Activated T-helper 1 cell treated with anti-CD3 and anti-CD28 coated beads, Interleukin-12 subunit alpha, Interleukin-12 subunit beta, Interleukin-2, Interleukin-4 antibody, amounts not matched to agents 30 ng/mL and 10 ng/mL and 1 ng/mL, durations not matched to agents 14 hours and 24 hours and 36 hours (primary cell): ENCODE measurements at regions of chr6 and their contacts with region 1.

Region 1: GRCh38 chr6:31795616-31796298 is at the start of gene VARS1:
- DNase-seq: peak; percentile 84
- H3K4me3 Mint-ChIP-seq: peak within 1 kb of the TSS; percentile 86
- H3K27ac Mint-ChIP-seq: peak within 1 kb of the TSS; percentile 96
- H3K4me1 Mint-ChIP-seq: peaks cover 36% of the 10 kb centered on the region
- H3K27me3 Mint-ChIP-seq: no peaks in the 10 kb centered on the region
- total RNA-seq, gene VARS1: 150 and 161 TPM in 2 replicates

Region 2: GRCh38 chr6:31225735-31226134 is 570.0 kb before region 1 on chr6:
- intact Hi-C with region 1: no loop called
- DNase-seq: no peak
- H3K4me3 Mint-ChIP-seq: no peak overlapping the region
- H3K27ac Mint-ChIP-seq: no peak overlapping the region
- H3K4me1 Mint-ChIP-seq: no peaks in the 10 kb centered on the region
- H3K27me3 Mint-ChIP-seq: peaks cover 10% of the 10 kb centered on the region

Region 3: DNA sequence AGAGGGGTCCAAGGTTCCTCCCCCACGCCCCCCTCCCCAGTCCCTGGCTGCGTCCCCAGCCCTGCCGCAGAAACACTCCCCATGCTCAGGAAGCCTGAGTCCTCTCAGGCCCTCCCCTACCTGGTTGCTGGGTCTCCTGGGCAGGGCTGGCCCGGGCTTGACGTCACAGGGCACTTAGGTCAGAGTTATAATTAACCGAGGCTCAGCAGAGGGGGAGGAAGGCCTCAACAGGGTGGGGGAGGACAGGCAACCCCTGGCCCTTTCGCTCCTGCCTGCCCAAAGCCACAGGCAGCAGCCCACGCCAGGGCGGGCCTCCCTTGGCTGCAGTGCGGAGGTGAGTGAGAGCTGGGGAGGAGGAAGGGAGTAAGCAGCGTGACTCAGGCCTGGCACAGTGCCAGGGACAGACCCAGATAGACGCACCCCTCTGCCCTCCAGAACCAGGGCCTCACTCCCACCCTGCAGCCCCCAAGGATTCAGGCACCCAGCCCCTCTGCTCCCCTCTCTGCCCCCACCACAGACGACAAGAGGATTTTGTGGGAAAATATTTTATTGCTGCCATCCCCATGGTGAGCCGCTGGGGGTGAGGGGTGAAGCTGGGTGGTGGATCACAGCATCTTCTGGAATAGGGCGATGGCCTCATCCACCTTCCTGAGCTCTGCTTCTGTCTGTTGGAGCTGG is 18.6 kb before region 1 on chr6 and contains the start of gene VWA7:
- intact Hi-C with region 1: loop called (anchors 1 kb)
- DNase-seq: peak; percentile 68
- H3K4me3 Mint-ChIP-seq: no peak within 1 kb of the TSS
- H3K27ac Mint-ChIP-seq: peak within 1 kb of the TSS; percentile 87
- H3K4me1 Mint-ChIP-seq: peaks cover 25% of the 10 kb centered on the region
- H3K27me3 Mint-ChIP-seq: no peaks in the 10 kb centered on the region
- total RNA-seq, gene VWA7: 2.9 and 5.0 TPM in 2 replicates

Region 4: DNA sequence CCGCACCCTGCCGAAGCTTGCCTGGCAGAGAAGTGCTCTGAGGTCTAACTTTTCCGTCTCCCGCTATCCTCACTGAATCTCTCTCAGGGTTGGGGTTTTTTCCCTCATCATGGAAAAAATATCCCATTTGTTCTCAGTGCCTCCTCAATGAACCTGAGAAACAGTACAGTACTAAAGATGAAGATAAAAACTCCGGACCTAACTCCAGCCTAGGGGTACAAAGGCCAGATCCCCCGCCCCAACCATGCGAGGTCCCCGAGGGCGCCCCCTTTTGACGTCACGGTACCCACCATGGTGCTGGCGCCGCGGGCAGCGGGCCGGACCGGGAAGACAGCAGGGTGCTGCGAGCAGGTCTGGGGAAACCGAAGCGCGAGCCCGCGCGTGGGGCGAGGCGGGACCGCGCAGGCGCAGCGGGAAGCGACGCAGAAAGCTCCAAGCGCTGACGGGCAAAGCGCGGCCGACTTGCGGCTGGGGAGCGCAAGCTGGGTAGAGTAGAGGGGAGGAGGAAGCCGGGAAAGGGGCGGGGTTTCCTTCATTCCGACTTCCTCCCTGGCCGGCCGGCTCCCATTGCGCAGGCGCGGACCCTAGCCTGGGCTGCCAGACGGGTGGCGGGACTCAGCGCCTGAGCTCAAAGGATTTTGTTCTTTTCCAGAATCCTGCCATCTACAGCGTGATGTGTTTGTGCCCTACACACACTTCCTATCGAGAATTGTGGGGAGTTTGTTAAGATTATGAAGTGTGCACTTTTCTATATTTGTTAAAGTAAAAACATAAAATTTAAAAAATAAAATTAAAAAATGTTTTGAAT is 10.9 kb after region 1 on chr6 and contains the start of gene LSM2:
- intact Hi-C with region 1: loop called (anchors 1 kb)
- DNase-seq: peak; percentile 97
- H3K4me3 Mint-ChIP-seq: peak within 1 kb of the TSS; percentile 94
- H3K27ac Mint-ChIP-seq: peak within 1 kb of the TSS; percentile 90
- H3K4me1 Mint-ChIP-seq: peaks cover 20% of the 10 kb centered on the region
- H3K27me3 Mint-ChIP-seq: no peaks in the 10 kb centered on the region
- total RNA-seq, gene LSM2: 136 and 137 TPM in 2 replicates

Region 5: GRCh38 chr6:31815025-31815838 is 19.5 kb after region 1 on chr6 and contains the starts of genes HSPA1A and HSPA1L:
- intact Hi-C with region 1: loop called (anchors 2 kb)
- DNase-seq: peak; percentile 75
- H3K4me3 Mint-ChIP-seq: peak within 1 kb of the TSS; percentile 93
- H3K27ac Mint-ChIP-seq: peak within 1 kb of the TSS; percentile 95
- H3K4me1 Mint-ChIP-seq: peaks cover 50% of the 10 kb centered on the region
- H3K27me3 Mint-ChIP-seq: no peaks in the 10 kb centered on the region
- total RNA-seq, gene HSPA1A: 173 and 175 TPM in 2 replicates
- total RNA-seq, gene HSPA1L: 2.2 and 2.9 TPM in 2 replicates

Region 6: GRCh38 chr6:31827286-31828079 is 31.7 kb after region 1 on chr6 and contains the start of gene HSPA1B:
- intact Hi-C with region 1: loop called (anchors 1 kb)
- DNase-seq: peak; percentile 95
- H3K4me3 Mint-ChIP-seq: peak within 1 kb of the TSS; percentile 83
- H3K27ac Mint-ChIP-seq: peak within 1 kb of the TSS; percentile 93
- H3K4me1 Mint-ChIP-seq: peaks cover 41% of the 10 kb centered on the region
- H3K27me3 Mint-ChIP-seq: no peaks in the 10 kb centered on the region
- total RNA-seq, gene HSPA1B: 152 and 155 TPM in 2 replicates

Region 7: DNA sequence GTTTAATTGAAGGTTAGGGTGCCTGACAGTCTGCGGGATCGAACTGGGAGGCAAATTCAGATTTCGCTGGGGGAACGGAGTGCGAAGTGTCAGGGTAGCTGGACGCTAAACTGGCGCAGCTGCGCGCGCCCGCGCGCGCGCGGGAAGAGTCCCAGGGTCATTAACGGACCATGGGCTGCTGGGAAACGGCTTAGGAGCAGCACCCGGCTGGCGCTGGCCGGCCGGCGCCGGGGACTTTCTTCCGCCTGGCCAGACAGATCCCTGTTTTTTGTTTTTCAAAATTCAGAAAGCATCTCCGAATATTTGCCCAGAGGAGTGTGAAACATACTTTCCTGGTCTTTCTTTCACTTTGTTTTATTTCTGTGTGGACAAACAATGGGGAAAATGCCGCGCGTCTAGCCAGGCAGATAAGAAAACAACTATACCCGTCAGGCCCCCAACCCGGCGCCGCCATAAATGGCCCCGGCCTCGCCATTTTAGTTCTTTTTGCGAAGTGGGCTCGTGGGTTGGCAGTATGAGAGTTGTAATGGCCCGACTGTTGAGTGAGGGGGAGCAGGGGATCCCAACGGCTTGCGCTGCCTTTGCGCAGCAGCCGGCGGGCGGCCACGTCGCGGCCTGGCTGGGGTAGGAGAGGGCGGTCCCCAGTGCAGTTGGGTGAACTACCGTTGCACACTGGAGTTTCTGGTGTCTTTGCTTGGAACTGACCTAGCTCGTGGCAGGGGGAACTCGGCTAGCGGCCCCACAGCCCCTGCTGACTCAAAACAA is 38.9 kb after region 1 on chr6:
- intact Hi-C with region 1: loop called (anchors 2 kb)
- DNase-seq: peak; percentile 72
- H3K4me3 Mint-ChIP-seq: peak overlapping the region; percentile 94
- H3K27ac Mint-ChIP-seq: peak overlapping the region; percentile 100
- H3K4me1 Mint-ChIP-seq: peaks cover 49% of the 10 kb centered on the region
- H3K27me3 Mint-ChIP-seq: no peaks in the 10 kb centered on the region

Region 8: GRCh38 chr6:31862344-31863227 is 66.8 kb after region 1 on chr6 and contains the start of gene NEU1:
- intact Hi-C with region 1: loop called (anchors 1 kb)
- DNase-seq: peak; percentile 99
- H3K4me3 Mint-ChIP-seq: peak within 1 kb of the TSS; percentile 97
- H3K27ac Mint-ChIP-seq: peak within 1 kb of the TSS; percentile 94
- H3K4me1 Mint-ChIP-seq: peaks cover 37% of the 10 kb centered on the region
- H3K27me3 Mint-ChIP-seq: peaks cover 3% of the 10 kb centered on the region
- total RNA-seq, gene NEU1: 22.1 and 24.3 TPM in 2 replicates